ENCODE measurements at regions of chr1 and their contacts with region 1.

Region 1: DNA sequence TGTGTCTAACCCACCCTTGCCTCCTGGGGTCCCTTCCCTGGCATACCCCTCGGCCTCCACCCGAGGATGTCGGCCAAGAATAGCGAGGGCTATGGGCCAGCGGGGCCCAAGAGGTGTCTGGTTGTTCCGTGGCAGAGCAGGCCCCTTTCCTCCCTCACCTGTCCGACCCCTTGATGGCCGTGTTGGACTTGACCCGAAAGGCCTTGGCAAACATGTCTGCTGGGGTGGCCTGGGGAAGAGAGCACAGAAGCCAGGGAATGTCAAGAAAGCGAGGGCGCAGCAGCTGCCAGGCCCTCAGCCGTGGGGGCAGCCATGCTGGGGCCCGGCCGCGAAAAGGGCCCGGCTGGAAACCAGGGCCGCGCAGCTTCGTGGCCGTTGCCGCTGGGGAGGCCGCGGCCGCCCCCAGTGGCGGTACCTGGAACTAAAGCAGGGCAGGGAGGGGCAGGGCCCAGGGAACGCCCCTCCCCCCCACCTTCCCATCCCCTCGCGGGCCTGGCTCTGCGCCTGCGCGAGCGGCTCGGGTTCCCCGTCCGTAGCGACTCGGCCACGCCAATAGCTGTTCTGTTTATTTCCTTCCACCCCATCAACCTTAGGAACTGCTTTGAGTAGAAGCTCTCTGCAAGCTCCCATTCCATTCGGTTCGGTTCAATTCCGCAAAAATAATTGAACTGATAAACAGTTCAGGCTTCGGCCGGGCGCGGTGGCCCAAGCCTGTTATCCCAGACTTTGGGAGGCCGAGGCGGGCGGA is at the start of gene EIF2D:
- DNase-seq: peak; percentile 95 to 99
- ATAC-seq: peak; percentile 95 to 98
- H3K4me3 ChIP-seq: peak within 1 kb of the TSS; percentile 62
- H3K27ac ChIP-seq: peak within 1 kb of the TSS; percentile 78 to 88
- H3K4me1 ChIP-seq: peaks cover 6% of the 10 kb centered on the region
- CTCF ChIP-seq: peak; percentile 78
- EP300 ChIP-seq: peak in 1 of 2 experiments; percentile 21; a peak in 1 of 5 replicates
- POLR2A ChIP-seq: peak; percentile 87
- RAD21 ChIP-seq: peak in 1 of 2 experiments; percentile 42; a peak in 3 of 5 replicates
- polyA plus RNA-seq, gene EIF2D: 63.2 and 72.6 TPM in 2 replicates

Region 2: GRCh38 chr1:206590025-206590758 is 22.1 kb before region 1 on chr1:
- CTCF ChIA-PET with region 1: interaction called, 20 read pairs
- POLR2A ChIA-PET with region 1: interaction called, 3 read pairs
- DNase-seq: no peak
- ATAC-seq: peak in 1 of 2 experiments; percentile 43; a peak in 1 of 6 replicates
- H3K4me3 ChIP-seq: no peak overlapping the region
- H3K27ac ChIP-seq: no peak overlapping the region
- H3K4me1 ChIP-seq: no peaks in the 10 kb centered on the region
- CTCF ChIP-seq: peak; percentile 32
- EP300 ChIP-seq: no peak
- POLR2A ChIP-seq: no peak
- RAD21 ChIP-seq: peak in 1 of 2 experiments; percentile 31; a peak in 2 of 5 replicates

Region 3: DNA sequence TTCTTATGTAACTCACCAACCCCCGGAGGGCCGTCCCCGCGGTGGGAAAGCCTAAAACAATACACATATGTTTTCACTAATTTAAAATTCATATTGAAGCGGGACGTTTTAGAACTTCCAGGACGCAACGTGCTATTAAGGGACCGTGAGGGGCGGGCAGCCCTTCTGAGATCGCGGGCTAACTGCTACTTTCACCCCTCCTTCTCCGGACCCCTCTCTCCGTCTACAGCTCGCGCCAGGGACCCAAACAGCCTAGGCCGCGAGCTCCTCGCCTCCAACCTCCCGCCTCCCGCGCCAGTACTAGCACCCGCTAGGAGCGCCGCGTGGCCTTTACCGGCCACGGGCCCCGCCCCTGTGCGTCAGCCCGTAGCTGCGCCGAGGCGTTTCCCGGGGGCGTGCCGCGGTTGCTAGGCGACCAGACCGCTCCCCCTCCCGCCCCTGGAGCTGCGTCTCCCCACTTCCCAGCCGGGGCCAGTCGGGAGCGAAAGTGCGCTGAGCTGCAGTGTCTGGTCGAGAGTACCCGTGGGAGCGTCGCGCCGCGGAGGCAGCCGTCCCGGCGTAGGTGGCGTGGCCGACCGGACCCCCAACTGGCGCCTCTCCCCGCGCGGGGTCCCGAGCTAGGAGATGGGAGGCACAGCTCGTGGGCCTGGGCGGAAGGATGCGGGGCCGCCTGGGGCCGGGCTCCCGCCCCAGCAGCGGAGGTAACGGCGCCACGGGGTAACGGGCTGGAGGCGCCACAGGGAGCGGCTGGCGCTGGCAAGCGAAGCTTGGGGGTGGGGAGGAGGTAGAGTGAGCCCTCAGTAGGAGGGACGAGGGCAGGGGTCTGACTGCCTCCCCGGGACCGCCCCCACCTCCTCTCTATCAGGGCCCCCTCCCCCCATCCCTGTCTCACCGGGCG is 23.0 kb after region 1 on chr1 and contains the start of gene DYRK3:
- CTCF ChIA-PET with region 1: interaction called, 163 read pairs
- POLR2A ChIA-PET with region 1: interaction called, 14 read pairs
- DNase-seq: peak; percentile 87 to 93
- ATAC-seq: peak; percentile 91 to 95
- H3K4me3 ChIP-seq: peak within 1 kb of the TSS; percentile 91
- H3K27ac ChIP-seq: peak within 1 kb of the TSS; percentile 88 to 89
- H3K4me1 ChIP-seq: peaks cover 32% of the 10 kb centered on the region; the same call in 2 of the 3 replicates
- CTCF ChIP-seq: no peak
- EP300 ChIP-seq: no peak
- POLR2A ChIP-seq: peak; percentile 91
- RAD21 ChIP-seq: no peak; a peak in 1 of 5 replicates
- polyA plus RNA-seq, gene DYRK3: 7.3 and 9.3 TPM in 2 replicates

Region 4: DNA sequence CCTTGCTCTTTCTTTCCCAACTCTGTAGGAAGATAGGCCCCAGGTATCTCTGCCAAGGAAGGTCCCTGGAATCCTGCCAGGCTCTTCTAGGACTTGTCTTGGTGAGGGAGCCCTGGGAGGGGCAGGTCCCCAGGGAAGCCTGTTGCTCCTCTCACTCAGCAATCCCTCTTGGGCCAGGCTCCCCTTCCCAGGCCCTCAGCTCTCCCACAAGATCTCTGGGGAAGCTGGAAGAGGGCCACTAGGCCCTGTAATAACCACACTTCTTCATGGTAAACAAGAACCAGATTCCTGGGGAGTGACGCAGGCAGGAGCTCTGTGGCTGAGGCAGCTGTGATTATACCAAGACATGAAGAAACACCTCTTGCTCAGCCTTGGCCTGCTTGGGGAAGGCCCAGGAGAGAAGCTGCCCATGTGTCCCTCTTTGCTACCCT is 62.5 kb after region 1 on chr1:
- CTCF ChIA-PET with region 1: interaction called, 14 read pairs
- POLR2A ChIA-PET with region 1: interaction called, 3 read pairs
- DNase-seq: peak; percentile 46 to 85
- ATAC-seq: peak; percentile 96
- H3K4me3 ChIP-seq: no peak overlapping the region
- H3K27ac ChIP-seq: peak overlapping the region; percentile 64 to 84
- H3K4me1 ChIP-seq: peaks cover 29% of the 10 kb centered on the region
- CTCF ChIP-seq: no peak
- EP300 ChIP-seq: no peak
- POLR2A ChIP-seq: no peak
- RAD21 ChIP-seq: no peak

Region 5: GRCh38 chr1:206684478-206685333 is 72.4 kb after region 1 on chr1 and contains the start of gene MAPKAPK2:
- CTCF ChIA-PET with region 1: interaction called, 4 read pairs
- POLR2A ChIA-PET with region 1: interaction called, 12 read pairs
- DNase-seq: peak; percentile 72 to 91
- ATAC-seq: peak; percentile 72 to 84
- H3K4me3 ChIP-seq: peak within 1 kb of the TSS; percentile 91
- H3K27ac ChIP-seq: peak within 1 kb of the TSS; percentile 97 to 99
- H3K4me1 ChIP-seq: peaks cover 36% of the 10 kb centered on the region
- CTCF ChIP-seq: no peak
- EP300 ChIP-seq: no peak
- POLR2A ChIP-seq: peak; percentile 42
- RAD21 ChIP-seq: no peak
- polyA plus RNA-seq, gene MAPKAPK2: 37.2 and 48.5 TPM in 2 replicates

Measured in A549 (cell line).